ENCODE measurements at regions of chr9 and their contacts with region 1.

Region 1: DNA sequence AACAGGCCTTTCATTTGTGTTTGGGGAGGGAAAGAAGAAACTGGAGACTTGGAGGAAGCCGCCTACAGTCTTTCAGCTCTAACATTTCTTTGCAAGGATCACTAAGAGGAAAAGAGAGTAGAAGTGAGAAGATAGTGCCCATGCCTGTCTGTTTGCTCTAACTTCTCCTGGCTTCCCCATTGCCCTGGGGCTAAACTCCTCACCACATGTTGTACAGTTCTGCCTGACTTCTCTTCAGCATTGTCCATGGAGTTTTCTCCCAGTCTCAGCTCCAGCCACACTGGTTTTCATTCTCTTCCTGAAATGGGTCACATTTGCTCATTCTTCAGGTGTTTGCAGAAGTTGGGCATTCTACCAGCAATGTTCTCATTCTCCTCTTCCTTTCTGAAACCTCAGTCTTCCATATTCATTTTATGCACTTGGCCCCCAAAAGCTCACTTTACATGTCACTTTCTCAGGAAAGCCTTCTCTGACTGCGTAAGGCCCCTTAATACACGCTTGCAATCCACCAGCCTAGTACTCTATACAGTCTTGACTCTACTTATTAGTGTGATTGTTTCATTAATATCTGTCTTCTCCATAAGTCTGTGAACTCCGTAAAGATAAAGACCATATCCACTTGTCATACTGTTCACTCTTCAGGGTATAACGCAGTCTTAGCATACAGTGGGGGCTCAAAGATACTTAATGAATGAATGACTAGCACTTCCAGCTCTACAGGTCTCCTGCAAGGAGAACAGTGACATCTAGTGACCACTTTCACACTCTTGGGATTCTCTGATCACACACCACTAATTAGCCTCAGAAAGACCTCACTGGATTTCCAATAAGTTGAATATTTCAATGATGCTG is 40.2 kb upstream of the TRIM32 start:
- DNase-seq: no peak
- H3K4me3 ChIP-seq: no peak overlapping the region
- H3K27ac ChIP-seq: no peak overlapping the region
- H3K4me1 ChIP-seq: no peaks in the 10 kb centered on the region
- H3K27me3 ChIP-seq: no peaks in the 10 kb centered on the region
- CTCF ChIP-seq: peak; percentile 49

Region 2: DNA sequence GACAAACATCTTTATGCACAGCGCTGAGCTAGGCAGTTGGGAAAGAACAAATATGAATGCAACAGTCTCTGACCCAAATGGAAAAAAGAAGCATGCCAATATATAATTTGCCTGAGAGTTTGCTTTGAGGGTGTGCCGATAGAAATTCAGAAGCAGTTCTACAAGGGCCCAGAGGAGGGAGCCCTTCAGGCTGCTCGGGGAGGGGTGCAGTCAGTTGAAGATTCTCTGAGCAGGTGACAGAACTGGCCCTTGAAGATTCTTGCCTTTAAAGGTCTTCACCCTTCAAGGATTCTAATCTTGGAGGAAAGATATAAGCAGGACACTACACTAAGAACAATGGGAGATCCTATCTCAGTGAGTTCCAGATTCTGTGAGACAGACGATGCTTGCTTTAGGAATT is 497.0 kb before region 1 on chr9:
- intact Hi-C with region 1: loop called (anchors 5 kb)
- DNase-seq: peak; percentile 21
- H3K4me3 ChIP-seq: no peak overlapping the region
- H3K27ac ChIP-seq: no peak overlapping the region
- H3K4me1 ChIP-seq: no peaks in the 10 kb centered on the region
- H3K27me3 ChIP-seq: peaks cover 15% of the 10 kb centered on the region
- CTCF ChIP-seq: peak; percentile 55